ENCODE measurements at regions of chr1 and their contacts with region 1.

Region 1: GRCh38 chr1:207404849-207405525 is 49.1 kb upstream of the CR2 start:
- DNase-seq: peak; percentile 9
- H3K4me3 ChIP-seq: no peak overlapping the region
- H3K27me3 ChIP-seq: peaks cover 2% of the 10 kb centered on the region; the same call in 1 of the 2 replicates
- CTCF ChIP-seq: peak; percentile 72

Region 2: GRCh38 chr1:207084701-207085180 is 320.2 kb before region 1 on chr1:
- CTCF ChIA-PET with region 1: interaction called, 14 read pairs
- POLR2A ChIA-PET with region 1: no interaction called
- DNase-seq: no peak
- H3K4me3 ChIP-seq: no peak overlapping the region
- H3K27me3 ChIP-seq: no peaks in the 10 kb centered on the region; the same call in 1 of the 2 replicates
- CTCF ChIP-seq: peak; percentile 58

Region 3: DNA sequence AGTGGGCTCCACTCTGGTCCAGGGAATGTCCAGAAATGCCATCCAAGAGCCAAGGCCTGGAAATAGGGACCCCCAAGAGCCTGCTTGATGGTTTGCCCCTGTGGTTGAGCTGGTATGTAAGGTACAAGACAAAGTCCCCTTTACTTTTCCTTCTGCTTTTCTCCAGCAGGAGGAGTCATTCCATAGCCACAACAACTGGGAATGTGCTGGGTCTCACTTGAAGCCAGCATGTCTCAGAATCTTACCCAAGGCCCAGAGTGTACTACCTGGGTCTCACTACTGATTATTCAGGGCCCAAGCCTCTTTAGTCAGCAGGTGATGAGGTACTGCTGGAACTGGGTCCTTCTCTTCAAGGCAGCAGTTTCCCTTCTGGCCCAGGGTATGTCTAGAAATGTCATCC is 145.6 kb before region 1 on chr1:
- CTCF ChIA-PET with region 1: interaction called, 66 read pairs
- POLR2A ChIA-PET with region 1: no interaction called
- DNase-seq: no peak
- H3K4me3 ChIP-seq: no peak overlapping the region
- H3K27me3 ChIP-seq: no peaks in the 10 kb centered on the region
- CTCF ChIP-seq: peak; percentile 55

Region 4: DNA sequence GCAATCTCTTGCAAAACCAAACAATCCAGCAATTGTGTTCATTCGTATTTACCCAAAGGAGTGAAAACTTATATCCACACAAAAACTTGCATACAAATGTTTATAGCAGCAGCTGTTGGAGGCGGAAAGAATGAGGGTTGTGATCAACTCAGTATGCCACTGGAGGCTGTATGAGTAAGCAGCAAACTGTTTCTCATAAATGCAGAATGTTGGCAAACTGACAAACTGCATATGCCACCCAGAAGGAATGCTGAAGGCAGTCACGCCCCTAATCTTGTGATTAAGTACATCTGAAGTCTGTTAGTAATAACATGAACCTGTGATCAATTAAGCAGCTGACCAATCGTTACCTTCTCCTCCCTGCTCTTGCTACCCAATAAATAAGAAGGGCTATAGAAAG is 11.4 kb before region 1 on chr1:
- CTCF ChIA-PET with region 1: interaction called, 11 read pairs
- POLR2A ChIA-PET with region 1: no interaction called
- DNase-seq: peak; percentile 96
- H3K4me3 ChIP-seq: no peak overlapping the region
- H3K27me3 ChIP-seq: no peaks in the 10 kb centered on the region
- CTCF ChIP-seq: no peak

Region 5: GRCh38 chr1:207421078-207421477 is 16.1 kb after region 1 on chr1:
- CTCF ChIA-PET with region 1: no interaction called
- POLR2A ChIA-PET with region 1: no interaction called
- DNase-seq: no peak
- H3K4me3 ChIP-seq: no peak overlapping the region
- H3K27me3 ChIP-seq: no peaks in the 10 kb centered on the region; the same call in none of the 2 replicates
- CTCF ChIP-seq: no peak